ENCODE measurements at regions of chrX and their contacts with region 1.

Region 1: DNA sequence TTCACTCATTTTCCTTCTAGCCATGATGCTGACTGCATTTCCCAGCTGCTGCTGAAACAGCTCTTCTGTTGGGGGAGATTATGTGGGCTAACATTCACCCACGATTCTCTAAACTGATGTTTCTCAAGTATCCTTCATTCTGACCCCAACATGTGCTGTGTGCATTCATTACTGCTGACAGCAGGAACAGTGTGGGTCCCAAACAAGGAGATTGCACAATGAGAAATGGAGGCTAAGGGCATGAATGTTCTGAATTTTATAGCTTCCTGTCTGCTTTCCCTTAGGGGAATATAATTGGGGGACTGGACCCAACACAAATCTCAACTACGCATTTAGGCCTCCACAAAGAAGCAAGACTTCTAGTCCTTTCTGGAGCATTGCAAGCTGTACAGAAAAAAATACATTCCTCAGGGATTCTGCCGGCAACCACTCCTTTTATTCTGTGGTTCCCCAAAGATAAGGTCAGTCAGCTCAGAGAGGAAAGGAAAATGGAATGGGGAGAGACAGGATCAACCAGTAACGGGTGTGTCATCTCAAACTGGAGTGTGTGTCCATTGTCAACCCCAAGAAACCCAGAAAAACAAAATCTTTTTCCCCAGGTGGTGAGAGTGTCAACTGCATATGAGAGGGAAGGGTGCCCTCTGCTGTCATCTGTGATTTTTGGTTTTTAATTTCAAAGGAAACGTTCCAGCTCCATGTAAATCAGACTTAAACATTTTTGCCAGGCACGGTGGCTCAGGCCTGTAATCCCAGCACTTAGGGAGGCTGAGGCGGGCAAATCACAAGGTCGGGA is 81.5 kb upstream of the EGFL6 start:
- ATAC-seq: peak; percentile 52 to 83 (median 72)
- H3K4me3 ChIP-seq: no peak overlapping the region
- H3K27ac ChIP-seq: peak overlapping the region; percentile 8 to 37
- H3K4me1 ChIP-seq: peaks cover 9 to 10% of the 10 kb centered on the region in 2 donors

Region 2: DNA sequence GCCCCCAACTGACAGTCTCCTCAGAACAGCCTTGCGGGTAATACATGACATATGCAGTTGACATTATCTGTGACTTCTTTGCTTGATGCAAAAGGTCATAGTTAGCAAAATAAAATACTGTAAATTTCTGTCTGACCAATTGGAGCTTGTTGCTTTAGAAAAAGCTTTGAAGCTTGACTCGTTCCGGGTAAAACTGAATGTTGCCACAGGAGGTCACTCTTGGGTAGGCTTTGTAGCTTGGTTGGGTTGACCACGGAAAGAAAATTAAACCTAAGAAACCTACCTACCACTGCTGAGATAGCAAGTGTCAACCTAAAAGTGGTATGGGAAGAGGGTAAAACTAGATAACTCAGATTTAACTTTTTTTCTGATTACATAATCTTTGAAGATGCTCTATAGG is 673.5 kb before region 1 on chrX:
- in situ Hi-C with region 1: loop called in 3 of 9 experiments (anchors 25 kb)
- ATAC-seq: peak in 4 of 8 experiments; percentile 32 to 59 (median 42)
- H3K4me3 ChIP-seq: no peak overlapping the region
- H3K27ac ChIP-seq: no peak overlapping the region
- H3K4me1 ChIP-seq: no peaks in the 10 kb centered on the region

Region 3: DNA sequence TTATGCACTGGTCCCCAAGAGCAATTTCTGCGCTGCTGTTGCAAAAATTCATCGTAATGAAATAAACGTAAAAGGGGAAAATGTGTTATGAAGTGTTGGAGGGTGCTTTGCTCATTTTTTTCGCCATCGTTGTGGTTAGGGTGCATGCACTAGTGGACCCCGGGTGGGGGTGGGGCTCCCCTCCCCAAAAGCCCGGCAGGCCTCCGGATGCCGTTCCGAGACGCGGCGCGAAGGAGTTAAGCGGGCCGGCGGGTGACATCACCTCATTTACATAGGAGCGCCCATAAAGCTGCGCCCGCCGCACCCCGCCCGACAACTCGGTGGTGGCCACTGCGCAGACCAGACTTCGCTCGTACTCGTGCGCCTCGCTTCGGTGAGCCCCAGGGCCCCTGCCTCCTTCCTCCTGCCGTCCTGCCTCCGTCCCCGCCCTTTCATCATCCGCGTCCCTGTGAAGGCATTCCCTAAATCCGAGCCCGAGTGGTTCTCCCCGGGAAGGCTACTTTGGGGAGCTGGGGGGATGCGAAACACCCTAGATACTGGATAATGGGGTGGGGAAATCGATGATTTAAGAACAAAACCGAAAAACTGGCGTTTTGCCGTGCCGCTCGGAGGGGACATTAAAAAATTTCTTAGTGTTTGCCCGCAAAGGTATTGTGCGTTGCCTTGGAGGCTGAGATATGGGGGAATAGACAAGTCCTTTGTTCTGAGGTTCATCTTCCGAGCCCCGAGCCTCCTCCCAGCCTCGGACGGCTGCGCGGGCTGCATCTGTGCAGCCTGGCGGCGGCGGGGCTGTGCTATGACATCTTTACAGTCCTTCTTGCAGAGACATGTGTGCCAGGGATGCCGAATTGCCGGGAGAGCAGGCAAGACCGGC is 512.9 kb before region 1 on chrX and contains the start of gene TMSB4X:
- in situ Hi-C with region 1: loop called in 6 of 9 experiments (anchors 25 kb)
- ATAC-seq: peak; percentile 52 to 83 (median 77)
- H3K4me3 ChIP-seq: peak within 1 kb of the TSS; percentile 70 to 99 (median 90)
- H3K27ac ChIP-seq: peak within 1 kb of the TSS; percentile 96 to 98
- H3K4me1 ChIP-seq: peaks cover 29 to 30% of the 10 kb centered on the region in 2 donors
- total RNA-seq, gene TMSB4X: 2,326 to 8,210 (median 4,514) TPM

Region 4: GRCh38 chrX:13235930-13236329 is 252.0 kb before region 1 on chrX:
- in situ Hi-C with region 1: loop called in 1 of 9 experiments (anchors 25 kb)
- ATAC-seq: no peak
- H3K4me3 ChIP-seq: no peak overlapping the region
- H3K27ac ChIP-seq: no peak overlapping the region
- H3K4me1 ChIP-seq: peaks cover 0 to 14% of the 10 kb centered on the region in 2 donors

Region 5: GRCh38 chrX:14290335-14290734 is 802.4 kb after region 1 on chrX:
- in situ Hi-C with region 1: no loop called
- ATAC-seq: no peak
- H3K4me3 ChIP-seq: no peak overlapping the region
- H3K27ac ChIP-seq: no peak overlapping the region
- H3K4me1 ChIP-seq: peaks cover 8 to 10% of the 10 kb centered on the region in 2 donors

Measured in motor neuron (in vitro differentiated cells).